Left cardiac atrium (tissue), 4 donors: ENCODE measurements at regions of chr1 and their contacts with region 1.

Region 1: GRCh38 chr1:156751758-156752757 is 583 bp upstream of the HDGF start:
- DNase-seq: peak; percentile 98
- ATAC-seq: peak; percentile 81 to 84

Region 2: DNA sequence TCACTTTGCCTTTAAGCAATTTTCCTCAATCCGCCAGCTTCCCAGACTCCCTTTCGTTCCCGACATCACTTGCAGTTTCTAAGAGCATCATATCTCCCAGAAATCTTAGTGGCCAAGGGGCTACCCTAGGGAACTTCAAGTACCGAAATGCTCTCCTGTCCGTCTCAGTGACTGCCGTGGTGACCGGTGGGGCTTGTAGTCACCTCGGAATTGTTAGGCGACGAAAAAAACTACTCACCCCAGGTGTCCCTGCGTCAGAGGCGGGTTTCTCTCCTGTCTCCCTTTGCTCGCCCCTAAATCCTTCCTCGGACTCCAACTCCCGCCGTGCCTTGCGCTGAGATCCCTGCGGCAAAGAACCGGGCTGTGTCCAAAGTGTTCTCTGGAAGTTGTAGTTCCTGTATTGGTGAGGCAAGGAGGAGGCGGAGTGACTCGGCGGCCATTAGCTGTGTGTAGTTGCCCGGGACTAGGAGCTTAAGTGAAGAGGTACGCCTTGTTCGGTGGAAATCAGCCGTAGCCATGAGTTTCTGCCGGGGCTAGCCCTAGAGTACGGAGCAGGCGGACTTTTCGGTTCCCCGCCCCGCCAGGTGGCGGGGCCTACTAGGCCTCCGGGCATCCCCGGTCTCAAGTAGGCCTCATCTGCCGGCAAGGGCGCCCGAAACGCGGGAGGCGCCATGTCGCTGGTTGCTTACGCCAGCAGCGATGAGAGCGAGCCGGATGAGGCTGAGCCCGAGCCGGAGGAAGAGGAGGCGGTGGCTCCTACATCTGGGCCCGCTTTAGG is 15.2 kb after region 1 on chr1 and contains the start of gene PRCC:
- intact Hi-C with region 1: loop called in 1 of 2 experiments (anchors 2 kb)
- DNase-seq: peak; percentile 97
- ATAC-seq: peak; percentile 96 to 97
- total RNA-seq, gene PRCC: 32.0 to 46.2 TPM

Region 3: DNA sequence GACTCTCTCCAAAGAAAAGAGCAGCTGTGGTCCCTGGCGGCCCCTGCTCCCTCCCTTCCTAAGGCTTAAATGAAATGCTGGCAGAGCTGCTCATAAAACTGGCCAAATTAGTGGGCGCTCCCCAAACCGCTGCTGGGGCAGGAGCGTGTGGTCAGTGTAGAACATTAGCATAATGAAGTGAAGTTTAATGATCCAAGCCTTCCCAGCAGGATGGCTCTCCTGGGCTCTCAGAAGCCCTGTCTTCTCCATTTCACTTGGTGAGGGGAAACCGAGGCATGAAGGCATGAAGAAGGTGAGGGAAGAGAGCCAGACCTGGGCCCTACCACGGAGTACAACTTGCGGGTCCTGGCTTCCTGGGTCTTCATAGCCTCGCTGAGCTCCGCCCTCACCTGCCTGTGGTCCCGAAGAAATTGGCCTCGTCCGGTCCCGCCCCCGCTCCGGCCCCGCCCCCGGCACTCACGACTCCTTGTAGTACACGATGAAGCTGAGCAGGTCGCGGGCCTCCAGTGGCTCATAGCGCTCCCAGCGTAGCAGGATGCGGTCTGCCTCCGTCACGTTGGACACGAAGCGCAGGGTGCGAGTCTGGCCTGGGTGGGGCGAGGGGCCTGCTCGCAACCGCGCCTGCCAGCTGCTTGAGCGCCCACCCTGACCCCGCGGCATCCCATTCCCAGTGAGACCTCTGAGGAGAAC is 96.5 kb after region 1 on chr1:
- intact Hi-C with region 1: no loop called
- DNase-seq: no peak
- ATAC-seq: peak in 1 of 2 donors; percentile 6